Sigmoid colon (tissue), 7 donors: ENCODE measurements at regions of chr4 and their contacts with region 1.

Region 1: GRCh38 chr4:103008875-103009729 is 10.4 kb downstream of the SLC9B1 start:
- DNase-seq: no peak
- H3K4me3 ChIP-seq: no peak overlapping the region
- H3K27ac ChIP-seq: no peak overlapping the region
- H3K4me1 ChIP-seq: peaks cover 0 to 24% (median 19%) of the 10 kb centered on the region in 4 donors
- H3K27me3 ChIP-seq: no peaks in the 10 kb centered on the region
- CTCF ChIP-seq: peak; percentile 30 to 69 (median 60)
- EP300 ChIP-seq: no peak
- POLR2A ChIP-seq: no peak

Region 2: DNA sequence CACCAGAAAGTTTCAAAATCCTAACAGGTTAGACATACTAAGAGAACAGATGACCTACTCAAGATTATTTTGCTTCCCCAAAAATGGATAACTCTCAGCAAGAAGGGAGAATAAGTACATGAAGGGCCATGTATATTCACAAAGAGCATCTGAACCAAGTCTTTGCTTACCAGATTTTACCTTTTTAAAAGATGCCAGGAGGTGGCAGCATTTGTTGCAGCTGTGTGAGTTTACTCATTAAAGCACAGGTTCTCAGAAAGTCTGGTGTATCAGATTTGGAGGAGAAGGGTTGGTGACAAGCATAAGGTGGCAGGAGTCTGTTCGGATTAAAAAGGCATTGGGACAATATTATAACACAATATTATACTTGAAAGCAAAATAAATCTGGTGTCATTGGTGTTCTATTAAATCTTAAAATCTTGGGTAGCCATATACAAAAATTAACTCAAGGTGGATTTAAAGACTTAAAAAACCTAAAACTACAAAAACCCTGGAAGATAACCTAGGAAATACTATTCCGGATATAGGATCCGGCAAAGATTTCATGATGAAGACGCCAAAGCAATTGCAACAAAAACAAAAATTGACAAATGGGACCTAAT is 559.2 kb before region 1 on chr4:
- intact Hi-C with region 1: loop called (anchors 5 kb)
- DNase-seq: no peak
- H3K4me3 ChIP-seq: no peak overlapping the region
- H3K27ac ChIP-seq: no peak overlapping the region
- H3K4me1 ChIP-seq: no peaks in the 10 kb centered on the region
- H3K27me3 ChIP-seq: no peaks in the 10 kb centered on the region
- CTCF ChIP-seq: peak; percentile 30 to 59 (median 39)
- EP300 ChIP-seq: no peak
- POLR2A ChIP-seq: no peak

Region 3: GRCh38 chr4:102620697-102621497 is 388.2 kb before region 1 on chr4:
- intact Hi-C with region 1: loop called (anchors 2 kb)
- DNase-seq: no peak
- H3K4me3 ChIP-seq: peak overlapping the region in 1 of 4 donors; percentile 7
- H3K27ac ChIP-seq: peak overlapping the region in 1 of 4 donors; percentile 42
- H3K4me1 ChIP-seq: peaks cover 0 to 9% (median 6%) of the 10 kb centered on the region in 4 donors
- H3K27me3 ChIP-seq: no peaks in the 10 kb centered on the region
- CTCF ChIP-seq: peak; percentile 34 to 73 (median 50)
- EP300 ChIP-seq: no peak
- POLR2A ChIP-seq: no peak

Region 4: GRCh38 chr4:102696758-102697157 is 312.3 kb before region 1 on chr4:
- intact Hi-C with region 1: no loop called
- DNase-seq: no peak
- H3K4me3 ChIP-seq: no peak overlapping the region
- H3K27ac ChIP-seq: peak overlapping the region; percentile 8 to 43 (median 22)
- H3K4me1 ChIP-seq: no peaks in the 10 kb centered on the region
- H3K27me3 ChIP-seq: no peaks in the 10 kb centered on the region
- CTCF ChIP-seq: no peak
- EP300 ChIP-seq: no peak
- POLR2A ChIP-seq: no peak

Region 5: DNA sequence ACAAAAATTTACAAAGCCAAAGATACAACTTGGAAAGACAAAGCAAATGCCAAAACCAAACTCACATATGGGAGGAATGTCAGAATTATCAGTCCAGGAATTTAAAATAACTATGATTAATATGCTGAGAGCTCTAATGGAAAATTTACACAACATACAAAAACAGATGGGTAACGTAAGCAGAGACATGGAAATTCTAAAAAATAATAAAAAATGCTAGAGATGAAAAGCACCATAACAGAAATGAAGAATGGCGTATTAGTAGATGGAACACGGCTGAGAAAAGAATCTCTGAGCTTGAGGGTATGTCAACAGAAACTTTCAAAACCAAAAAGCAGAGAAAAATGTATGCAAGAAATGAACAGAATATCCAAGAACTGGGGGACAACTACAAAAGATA is 244.2 kb before region 1 on chr4:
- intact Hi-C with region 1: no loop called
- DNase-seq: no peak
- H3K4me3 ChIP-seq: no peak overlapping the region
- H3K27ac ChIP-seq: no peak overlapping the region
- H3K4me1 ChIP-seq: peaks cover 0 to 12% (median 8%) of the 10 kb centered on the region in 4 donors
- H3K27me3 ChIP-seq: no peaks in the 10 kb centered on the region
- CTCF ChIP-seq: no peak
- EP300 ChIP-seq: no peak
- POLR2A ChIP-seq: no peak